Astrocyte of the cerebellum (primary cell): ENCODE measurements at regions of chr3 and their contacts with region 1.

Region 1: DNA sequence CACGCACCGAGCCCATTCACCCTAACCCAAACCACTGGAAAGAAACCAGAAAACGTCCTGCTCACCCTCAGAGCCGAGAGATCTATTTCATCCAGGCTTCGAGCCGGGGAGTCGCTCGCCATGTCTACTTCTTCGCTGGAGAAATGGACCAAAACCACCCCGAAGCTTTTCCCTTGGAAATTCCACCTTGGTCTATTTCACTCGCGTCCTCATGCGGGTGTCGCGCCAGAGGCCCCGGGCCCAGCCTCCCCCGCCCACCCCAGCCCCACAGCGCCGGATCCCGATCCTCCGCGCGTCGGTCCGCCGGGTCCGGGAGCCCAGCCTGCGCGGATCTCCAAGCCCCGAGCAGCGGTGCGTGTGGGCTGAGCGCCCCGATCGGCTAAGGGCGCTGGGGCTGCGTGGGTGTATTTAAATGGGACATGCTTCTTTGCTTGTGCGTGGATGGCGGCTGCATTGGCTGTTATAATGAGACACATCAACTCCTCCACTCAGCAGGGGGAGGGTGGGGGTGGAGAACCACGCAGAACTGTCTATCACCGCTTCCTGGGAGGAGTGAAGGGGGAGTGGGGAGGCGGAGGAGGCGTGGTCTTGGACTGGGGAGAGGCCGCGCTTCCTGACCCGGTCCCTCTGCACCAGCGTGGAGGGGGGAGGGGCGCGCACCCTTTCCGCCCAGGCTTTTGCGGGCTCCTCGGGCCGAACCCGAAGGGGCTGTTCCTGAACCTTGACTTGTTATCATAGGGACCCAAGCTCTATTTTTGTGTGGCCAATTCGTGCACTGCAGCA is at the start of gene TNIK:
- DNase-seq: peak; percentile 53
- H3K4me3 ChIP-seq: peak within 1 kb of the TSS; percentile 69
- CTCF ChIP-seq: peak; percentile 27

Region 2: DNA sequence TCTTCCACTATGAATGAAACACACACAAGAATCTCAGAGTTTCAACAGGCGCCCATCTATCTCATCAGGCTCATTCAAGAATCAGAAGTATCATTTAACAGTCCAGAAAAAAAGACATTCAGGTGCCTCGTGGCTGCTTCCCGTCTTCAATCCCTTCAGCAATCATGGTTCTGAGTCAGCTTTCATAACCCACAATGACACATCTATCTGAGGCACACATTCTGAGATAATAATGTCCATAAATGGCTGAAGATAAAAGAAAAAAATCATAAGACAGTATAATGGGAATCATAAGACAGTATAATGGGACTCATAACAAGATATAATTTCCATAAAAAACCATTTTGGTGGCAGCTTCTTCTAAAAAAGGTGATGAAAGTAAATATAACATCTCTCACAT is 52.4 kb before region 1 on chr3:
- in situ Hi-C with region 1: loop called (anchors 5 kb)
- DNase-seq: peak; percentile 20
- H3K4me3 ChIP-seq: no peak overlapping the region
- CTCF ChIP-seq: no peak

Region 3: GRCh38 chr3:171566803-171567422 is 106.8 kb after region 1 on chr3:
- in situ Hi-C with region 1: loop called (anchors 5 kb)
- DNase-seq: peak; percentile 22
- H3K4me3 ChIP-seq: no peak overlapping the region
- CTCF ChIP-seq: peak; percentile 57